ENCODE measurements at regions of chr17 and their contacts with region 1.

Region 1: DNA sequence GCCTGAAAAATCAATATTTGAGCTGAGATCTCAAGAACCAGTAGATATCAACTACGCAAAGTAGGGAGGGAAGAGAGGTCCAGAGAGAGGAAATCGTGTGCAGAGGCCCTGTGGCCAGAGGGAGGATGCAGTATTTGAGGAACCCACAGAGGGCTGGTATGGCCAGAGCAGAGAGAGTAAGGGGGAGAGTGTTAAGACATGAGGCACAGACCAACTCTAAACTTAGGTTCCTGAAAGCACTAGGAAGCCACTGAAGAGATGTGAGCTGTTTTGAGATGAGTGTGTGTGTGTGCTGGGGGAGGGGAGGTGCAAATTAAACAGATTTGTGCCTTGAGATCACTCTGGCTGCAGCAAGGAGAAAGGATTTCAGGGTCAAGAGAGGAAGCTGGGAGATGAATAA is 10.9 kb downstream of the SLC13A2 start:
- DNase-seq: no peak
- H3K4me3 ChIP-seq: no peak overlapping the region
- H3K27me3 ChIP-seq: peaks cover 19% of the 10 kb centered on the region
- CTCF ChIP-seq: no peak

Region 2: GRCh38 chr17:28433721-28434120 is 50.6 kb before region 1 on chr17:
- CTCF ChIA-PET with region 1: interaction called, 11 read pairs
- POLR2A ChIA-PET with region 1: no interaction called
- DNase-seq: no peak
- H3K4me3 ChIP-seq: no peak overlapping the region
- H3K27me3 ChIP-seq: peaks cover 4% of the 10 kb centered on the region
- CTCF ChIP-seq: no peak

Region 3: GRCh38 chr17:28466001-28466400 is 18.3 kb before region 1 on chr17:
- CTCF ChIA-PET with region 1: no interaction called
- POLR2A ChIA-PET with region 1: no interaction called
- DNase-seq: no peak
- H3K4me3 ChIP-seq: no peak overlapping the region
- H3K27me3 ChIP-seq: peaks cover 11% of the 10 kb centered on the region
- CTCF ChIP-seq: no peak

Measured in BJ (cell line).